ENCODE measurements at regions of chr14 and their contacts with region 1.

Region 1: GRCh38 chr14:105168979-105169507 is 467 bp upstream of the JAG2 start:
- DNase-seq: no peak
- ATAC-seq: peak; percentile 43
- H3K4me3 ChIP-seq: peak overlapping the region; percentile 15 to 28; a peak in 3 of 4 replicates
- H3K27ac ChIP-seq: no peak overlapping the region
- H3K4me1 ChIP-seq: peaks cover 40% of the 10 kb centered on the region
- H3K27me3 ChIP-seq: no peaks in the 10 kb centered on the region
- CTCF ChIP-seq: peak; percentile 72

Region 2: GRCh38 chr14:104805941-104806624 is 363.0 kb before region 1 on chr14:
- CTCF ChIA-PET with region 1: no interaction called
- POLR2A ChIA-PET with region 1: no interaction called
- in situ Hi-C with region 1: no loop called
- intact Hi-C with region 1: no loop called
- DNase-seq: no peak
- ATAC-seq: 0 out of 2 replicates have a peak, but pooled peaks have one; percentile 18
- H3K4me3 ChIP-seq: no peak overlapping the region
- H3K27ac ChIP-seq: peak overlapping the region; percentile 63
- H3K4me1 ChIP-seq: peaks cover 44% of the 10 kb centered on the region
- H3K27me3 ChIP-seq: no peaks in the 10 kb centered on the region
- CTCF ChIP-seq: no peak

Region 3: DNA sequence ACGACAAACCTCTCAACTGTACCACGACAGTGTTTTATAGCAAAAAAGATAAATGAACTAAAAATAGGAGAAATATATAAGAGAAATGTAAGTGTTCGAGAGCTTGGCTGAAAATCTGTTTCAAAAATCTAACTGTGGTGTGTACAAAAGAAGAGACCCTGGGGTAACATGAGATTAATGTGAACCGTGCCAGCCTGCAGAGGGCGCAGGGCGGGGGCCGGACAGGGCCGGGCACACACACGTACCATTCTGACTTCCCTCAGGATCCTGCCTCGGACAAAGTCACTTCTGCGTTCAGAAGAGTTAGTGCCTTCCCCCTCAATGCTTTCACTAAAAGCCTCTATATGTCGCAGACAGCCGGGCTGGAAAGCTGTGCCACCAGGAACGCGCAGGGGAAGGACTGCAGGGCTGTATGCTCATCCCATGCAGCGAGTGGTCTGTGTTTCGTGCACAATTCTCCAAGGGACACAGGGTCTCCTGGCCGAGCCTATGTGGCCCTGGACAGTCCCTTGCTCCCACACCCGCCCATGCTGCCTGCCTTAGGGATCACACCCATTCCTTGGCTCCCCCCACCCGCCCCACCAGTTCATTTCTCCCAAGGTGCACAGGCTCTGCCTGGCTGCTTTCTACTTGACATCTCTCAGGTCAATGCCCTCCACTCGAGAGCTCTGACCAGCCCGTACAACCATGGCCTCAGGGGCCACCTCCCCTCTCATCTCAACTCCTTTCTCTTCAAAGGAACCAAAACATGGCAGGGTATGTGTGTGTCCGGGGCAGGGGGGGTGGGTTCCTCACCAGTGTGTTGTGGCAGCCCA is 156.7 kb before region 1 on chr14:
- CTCF ChIA-PET with region 1: interaction called, 13 read pairs
- POLR2A ChIA-PET with region 1: no interaction called
- in situ Hi-C with region 1: no loop called
- intact Hi-C with region 1: no loop called
- DNase-seq: no peak
- ATAC-seq: peak; percentile 76
- H3K4me3 ChIP-seq: no peak overlapping the region
- H3K27ac ChIP-seq: peak overlapping the region; percentile 61
- H3K4me1 ChIP-seq: peaks cover 50% of the 10 kb centered on the region
- H3K27me3 ChIP-seq: no peaks in the 10 kb centered on the region
- CTCF ChIP-seq: peak; percentile 86

Region 4: DNA sequence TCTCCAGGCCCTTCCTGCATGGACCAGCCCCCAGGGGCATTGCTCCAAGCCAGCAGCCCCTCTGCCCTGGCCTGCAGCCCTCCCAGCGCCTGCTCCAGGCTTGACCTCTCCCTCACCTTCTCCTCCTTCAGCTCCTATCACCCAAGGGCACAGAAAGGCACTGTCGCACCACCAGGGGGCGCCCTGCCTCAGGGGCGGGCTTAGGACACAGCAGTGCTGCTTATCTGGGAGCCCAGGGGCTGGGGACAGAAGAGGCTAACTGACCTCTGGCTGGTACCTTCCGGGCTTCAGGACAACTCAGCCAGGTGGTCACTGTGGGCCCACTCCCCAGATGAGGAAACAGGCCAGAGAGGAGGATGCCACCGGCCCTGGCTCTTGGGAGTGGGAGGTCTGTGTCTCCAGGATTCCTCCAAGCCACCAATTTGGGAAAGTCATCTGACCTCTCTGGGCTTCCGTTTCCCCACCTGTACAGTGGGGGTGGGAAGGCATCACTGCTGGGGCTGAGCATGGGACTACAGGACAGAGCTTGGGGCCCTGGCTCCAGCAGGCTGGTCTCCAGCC is 78.5 kb before region 1 on chr14:
- CTCF ChIA-PET with region 1: interaction called, 3 read pairs
- POLR2A ChIA-PET with region 1: interaction called, 3 read pairs
- in situ Hi-C with region 1: no loop called
- intact Hi-C with region 1: loop called (anchors 10 kb)
- DNase-seq: no peak
- ATAC-seq: peak; percentile 61
- H3K4me3 ChIP-seq: no peak overlapping the region; a peak in 1 of 4 replicates
- H3K27ac ChIP-seq: peak overlapping the region; percentile 86
- H3K4me1 ChIP-seq: peaks cover 46% of the 10 kb centered on the region
- H3K27me3 ChIP-seq: no peaks in the 10 kb centered on the region
- CTCF ChIP-seq: peak; percentile 95